PC-9 (cell line): ENCODE measurements at regions of chr14 and their contacts with region 1.

Region 1: GRCh38 chr14:77965919-77966435 is 166.1 kb downstream of the ADCK1 start:
- DNase-seq: no peak
- H3K4me3 ChIP-seq: no peak overlapping the region
- H3K27ac ChIP-seq: no peak overlapping the region
- H3K4me1 ChIP-seq: no peaks in the 10 kb centered on the region
- H3K27me3 ChIP-seq: peaks cover 41% of the 10 kb centered on the region
- CTCF ChIP-seq: no peak

Region 2: DNA sequence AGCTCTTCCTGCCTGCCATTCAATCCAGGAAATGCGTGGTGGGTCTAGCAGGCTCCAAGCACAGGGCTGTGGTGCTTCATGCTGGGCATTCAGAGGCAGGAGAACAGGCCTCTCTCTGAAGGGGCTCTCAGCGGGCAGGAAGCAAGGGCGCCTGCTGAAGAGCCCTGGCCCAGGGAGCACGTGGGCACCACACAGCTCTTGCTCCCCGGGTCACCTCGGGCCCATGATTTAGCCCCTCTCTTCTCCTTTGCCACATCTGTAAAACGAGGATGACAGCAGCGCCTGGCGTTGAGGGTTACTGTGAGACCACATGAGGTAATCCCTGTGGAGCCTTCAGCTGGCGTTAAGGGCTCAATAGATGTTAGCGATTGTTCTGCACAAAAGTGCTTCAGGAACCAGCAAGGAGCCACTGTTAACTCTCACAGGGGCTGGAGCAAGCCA is 312.0 kb before region 1 on chr14:
- CTCF ChIA-PET with region 1: no interaction called
- POLR2A ChIA-PET with region 1: no interaction called
- intact Hi-C with region 1: loop called (anchors 10 kb)
- DNase-seq: no peak
- H3K4me3 ChIP-seq: no peak overlapping the region
- H3K27ac ChIP-seq: no peak overlapping the region
- H3K4me1 ChIP-seq: no peaks in the 10 kb centered on the region
- H3K27me3 ChIP-seq: no peaks in the 10 kb centered on the region
- CTCF ChIP-seq: no peak

Region 3: DNA sequence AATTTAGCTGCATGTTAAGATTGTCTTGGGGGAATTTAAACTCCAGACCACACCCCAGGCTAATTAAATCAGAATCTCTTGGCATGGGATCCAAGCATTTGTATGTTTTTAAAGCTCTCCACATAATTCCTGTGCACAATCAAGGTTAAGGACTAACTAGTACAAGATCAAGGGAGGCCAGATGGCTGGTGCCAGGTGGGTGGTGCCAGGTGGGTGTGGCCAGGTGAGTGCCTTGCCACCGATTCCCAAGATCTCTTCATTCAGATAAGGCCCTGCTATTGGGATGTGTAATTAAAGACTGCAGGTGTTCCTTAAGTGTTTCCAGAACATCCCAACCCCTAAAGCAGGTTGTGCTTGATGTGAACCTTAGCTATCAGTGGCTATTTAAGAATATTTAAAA is 279.3 kb after region 1 on chr14:
- CTCF ChIA-PET with region 1: no interaction called
- POLR2A ChIA-PET with region 1: no interaction called
- intact Hi-C with region 1: no loop called
- DNase-seq: no peak
- H3K4me3 ChIP-seq: no peak overlapping the region
- H3K27ac ChIP-seq: no peak overlapping the region
- H3K4me1 ChIP-seq: no peaks in the 10 kb centered on the region
- H3K27me3 ChIP-seq: peaks cover 84% of the 10 kb centered on the region
- CTCF ChIP-seq: no peak

Region 4: DNA sequence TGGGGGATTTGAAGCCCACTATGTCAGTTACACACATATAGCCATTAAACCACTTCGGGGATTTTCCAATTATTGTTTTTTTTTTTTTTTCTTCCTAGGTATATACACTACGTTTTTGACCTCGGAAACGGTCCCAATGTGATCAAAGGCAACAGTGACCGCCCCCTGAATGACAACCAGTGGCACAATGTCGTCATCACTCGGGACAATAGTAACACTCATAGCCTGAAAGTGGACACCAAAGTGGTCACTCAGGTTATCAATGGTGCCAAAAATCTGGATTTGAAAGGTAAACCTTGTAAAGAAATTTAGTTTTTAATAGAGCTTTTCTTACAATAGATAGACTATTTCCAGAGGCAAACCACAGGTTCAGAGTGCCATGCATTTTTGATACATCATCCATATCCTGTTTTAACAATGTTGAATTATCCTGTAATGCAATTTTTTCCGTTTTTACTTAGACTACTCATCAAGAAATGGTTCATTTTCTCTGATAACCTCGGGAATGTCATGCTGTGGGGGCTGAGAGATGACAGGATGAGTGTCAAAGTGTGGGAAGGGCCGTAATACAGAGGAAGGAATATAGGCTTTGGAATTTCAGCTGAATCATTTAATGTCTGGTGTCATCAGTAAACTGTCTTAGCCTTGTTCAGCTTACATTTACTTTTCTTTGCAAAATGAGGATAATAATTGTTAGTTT is 1001.3 kb after region 1 on chr14:
- CTCF ChIA-PET with region 1: no interaction called
- POLR2A ChIA-PET with region 1: no interaction called
- intact Hi-C with region 1: no loop called
- DNase-seq: no peak
- H3K4me3 ChIP-seq: no peak overlapping the region
- H3K27ac ChIP-seq: no peak overlapping the region
- H3K4me1 ChIP-seq: no peaks in the 10 kb centered on the region
- H3K27me3 ChIP-seq: no peaks in the 10 kb centered on the region
- CTCF ChIP-seq: no peak